Psoas muscle (tissue), 8 donors: ENCODE measurements at regions of chr9 and their contacts with region 1.

Region 1: GRCh38 chr9:9942764-9943424 is 669.9 kb downstream of the PTPRD start:
- DNase-seq: peak; percentile 18 to 53
- ATAC-seq: peak in 1 of 4 donors; percentile 58
- H3K4me3 ChIP-seq: no peak overlapping the region
- H3K27ac ChIP-seq: no peak overlapping the region
- H3K4me1 ChIP-seq: no peaks in the 10 kb centered on the region
- H3K27me3 ChIP-seq: no peaks in the 10 kb centered on the region
- CTCF ChIP-seq: peak; percentile 72

Region 2: GRCh38 chr9:9605681-9606080 is 337.2 kb before region 1 on chr9:
- intact Hi-C with region 1: loop called in 1 of 2 experiments (anchors 5 kb)
- DNase-seq: no peak
- ATAC-seq: no peak
- H3K4me3 ChIP-seq: no peak overlapping the region
- H3K27ac ChIP-seq: no peak overlapping the region
- H3K4me1 ChIP-seq: no peaks in the 10 kb centered on the region
- H3K27me3 ChIP-seq: no peaks in the 10 kb centered on the region
- CTCF ChIP-seq: no peak

Region 3: DNA sequence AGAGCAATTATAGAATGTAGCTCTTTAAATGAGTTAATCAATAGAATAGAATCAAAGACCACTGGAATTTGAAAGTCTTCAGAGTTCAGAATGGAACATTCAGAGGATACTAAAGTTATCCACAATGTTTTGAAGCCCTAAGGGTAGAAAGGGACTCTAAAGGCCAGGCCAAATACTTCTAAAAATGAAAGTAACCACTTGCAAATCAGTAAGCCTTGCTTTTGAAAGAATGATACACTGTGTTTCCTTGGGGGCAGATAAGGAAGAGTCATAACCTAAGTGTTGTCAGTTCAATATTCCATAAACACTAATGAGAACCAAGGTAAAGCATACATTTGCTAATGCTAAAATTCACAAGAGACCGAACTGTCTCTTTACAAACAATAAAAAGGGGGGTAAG is 143.6 kb before region 1 on chr9:
- intact Hi-C with region 1: no loop called
- DNase-seq: no peak
- ATAC-seq: no peak
- H3K4me3 ChIP-seq: no peak overlapping the region
- H3K27ac ChIP-seq: no peak overlapping the region
- H3K4me1 ChIP-seq: no peaks in the 10 kb centered on the region
- H3K27me3 ChIP-seq: no peaks in the 10 kb centered on the region
- CTCF ChIP-seq: no peak

Region 4: GRCh38 chr9:10014889-10015288 is 72.0 kb after region 1 on chr9:
- intact Hi-C with region 1: no loop called
- DNase-seq: no peak
- ATAC-seq: no peak
- H3K4me3 ChIP-seq: no peak overlapping the region
- H3K27ac ChIP-seq: no peak overlapping the region
- H3K4me1 ChIP-seq: no peaks in the 10 kb centered on the region
- H3K27me3 ChIP-seq: no peaks in the 10 kb centered on the region
- CTCF ChIP-seq: no peak